Activated T-helper 2 cell treated with anti-CD3 and anti-CD28 coated beads, Interferon-gamma antibody, Interleukin-2, Interleukin-4, amounts not matched to agents 10 μg/mL and 5 μg/mL and 100 μg/mL, durations not matched to agents 14 hours and 24 hours and 36 hours (primary cell): ENCODE measurements at regions of chr14 and their contacts with region 1.

Region 1: DNA sequence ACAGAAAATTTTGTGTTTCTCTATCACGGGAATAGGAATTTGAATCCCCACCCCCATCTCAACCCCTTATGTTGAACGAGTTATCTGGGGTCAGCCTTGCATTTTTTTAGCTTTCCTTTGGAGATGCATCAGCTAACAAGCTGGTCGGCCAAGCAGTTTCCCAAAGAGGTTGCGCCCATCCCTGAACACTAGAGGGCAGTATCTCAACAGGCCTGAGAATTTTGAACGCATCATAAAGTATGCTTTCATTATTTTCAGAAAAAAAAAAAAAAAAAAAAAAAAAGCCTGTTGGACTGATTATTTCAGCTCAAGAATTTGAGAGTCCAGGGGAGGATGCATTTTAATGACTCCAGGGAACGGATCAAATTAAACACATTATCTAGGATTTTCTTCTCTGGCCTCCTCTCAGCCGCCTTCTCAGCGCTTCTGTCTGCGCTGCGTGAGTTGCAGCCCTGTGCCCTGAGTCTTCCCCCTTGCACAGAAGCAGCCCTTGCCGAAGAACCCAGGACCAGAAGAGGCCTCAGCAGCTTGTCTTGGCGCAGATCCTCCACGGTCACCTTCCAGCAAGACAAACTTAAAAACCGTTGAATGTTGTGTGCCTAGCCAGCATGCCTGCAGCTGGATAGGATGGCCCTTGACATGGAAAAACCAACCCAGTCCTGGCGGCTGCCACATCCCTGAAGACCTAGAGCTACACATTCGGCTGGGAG is 76.6 kb upstream of the GZMB start:
- DNase-seq: peak; percentile 52
- H3K4me3 Mint-ChIP-seq: no peak overlapping the region
- H3K27ac Mint-ChIP-seq: no peak overlapping the region
- H3K4me1 Mint-ChIP-seq: peaks cover 2% of the 10 kb centered on the region
- H3K27me3 Mint-ChIP-seq: peaks cover 4% of the 10 kb centered on the region

Region 2: DNA sequence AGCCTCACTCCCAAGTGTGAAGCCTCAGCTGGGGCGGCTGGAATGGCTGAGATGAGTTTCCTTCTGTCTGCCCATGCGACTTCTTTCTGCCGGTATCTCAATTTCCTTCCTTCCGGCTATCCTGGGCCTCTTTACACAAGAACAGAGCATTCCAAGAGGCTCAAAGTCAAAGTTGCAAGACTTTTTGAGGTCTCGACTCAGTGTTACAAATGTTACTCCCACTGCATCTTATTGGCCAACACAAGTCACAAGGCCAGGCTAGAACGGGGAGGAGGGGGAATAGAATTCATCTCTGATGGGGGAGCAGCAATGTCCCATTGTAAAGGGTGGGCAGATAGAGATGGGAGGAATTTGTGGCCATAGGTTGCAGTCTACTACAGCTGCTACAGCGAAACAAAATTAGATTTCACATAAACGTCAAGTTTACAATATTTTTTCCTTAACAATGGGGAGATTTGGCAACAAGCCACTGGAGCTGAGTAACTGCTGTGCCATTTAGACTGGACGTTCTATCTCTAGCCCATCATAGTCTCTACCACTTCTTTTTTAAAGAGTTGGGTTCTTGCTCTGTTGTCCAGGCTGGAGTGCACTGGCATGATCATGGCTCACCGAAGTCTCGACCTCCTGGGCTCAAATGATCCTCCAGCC is 321.2 kb before region 1 on chr14:
- intact Hi-C with region 1: no loop called
- DNase-seq: no peak
- H3K4me3 Mint-ChIP-seq: no peak overlapping the region
- H3K27ac Mint-ChIP-seq: no peak overlapping the region
- H3K4me1 Mint-ChIP-seq: no peaks in the 10 kb centered on the region
- H3K27me3 Mint-ChIP-seq: peaks cover 32% of the 10 kb centered on the region

Region 3: DNA sequence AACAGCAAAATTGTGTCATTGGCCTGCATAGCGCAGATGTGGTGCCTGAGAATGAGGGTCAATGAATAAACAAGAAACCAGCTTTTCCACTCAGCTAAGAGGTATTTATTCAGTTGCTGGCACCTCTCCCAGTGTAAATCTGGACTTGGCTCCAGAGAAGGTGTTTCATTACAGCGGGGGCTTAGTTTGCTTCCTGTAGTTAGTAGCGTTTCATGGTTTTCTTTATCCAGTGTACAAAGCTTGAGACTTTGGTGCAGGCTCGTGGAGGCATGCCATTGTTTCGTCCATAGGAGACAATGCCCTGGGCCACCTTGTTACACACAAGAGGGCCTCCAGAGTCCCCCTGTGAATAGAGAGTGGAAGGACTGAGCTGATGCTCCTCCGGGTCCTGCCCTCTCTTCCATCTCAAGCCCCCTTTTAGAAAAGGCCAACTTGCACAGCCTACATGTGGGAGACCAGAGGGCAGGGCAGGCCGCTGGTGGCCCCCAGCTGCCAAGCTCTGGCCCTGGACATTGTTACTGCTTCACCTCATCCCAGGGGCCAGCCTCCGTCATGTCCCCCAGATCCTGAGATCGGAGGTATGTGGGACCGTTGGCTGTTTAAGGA is 79.6 kb before region 1 on chr14:
- intact Hi-C with region 1: no loop called
- DNase-seq: no peak
- H3K4me3 Mint-ChIP-seq: peak overlapping the region; percentile 95
- H3K27ac Mint-ChIP-seq: peak overlapping the region; percentile 93
- H3K4me1 Mint-ChIP-seq: peaks cover 56% of the 10 kb centered on the region
- H3K27me3 Mint-ChIP-seq: no peaks in the 10 kb centered on the region

Region 4: GRCh38 chr14:25132732-25133422 is 422.3 kb after region 1 on chr14:
- intact Hi-C with region 1: loop called (anchors 1 kb)
- DNase-seq: peak; percentile 27
- H3K4me3 Mint-ChIP-seq: no peak overlapping the region
- H3K27ac Mint-ChIP-seq: no peak overlapping the region
- H3K4me1 Mint-ChIP-seq: no peaks in the 10 kb centered on the region
- H3K27me3 Mint-ChIP-seq: peaks cover 20% of the 10 kb centered on the region